Dorsolateral prefrontal cortex (tissue), 120 donors: ENCODE measurements at regions of chr3 and their contacts with region 1.

Region 1: DNA sequence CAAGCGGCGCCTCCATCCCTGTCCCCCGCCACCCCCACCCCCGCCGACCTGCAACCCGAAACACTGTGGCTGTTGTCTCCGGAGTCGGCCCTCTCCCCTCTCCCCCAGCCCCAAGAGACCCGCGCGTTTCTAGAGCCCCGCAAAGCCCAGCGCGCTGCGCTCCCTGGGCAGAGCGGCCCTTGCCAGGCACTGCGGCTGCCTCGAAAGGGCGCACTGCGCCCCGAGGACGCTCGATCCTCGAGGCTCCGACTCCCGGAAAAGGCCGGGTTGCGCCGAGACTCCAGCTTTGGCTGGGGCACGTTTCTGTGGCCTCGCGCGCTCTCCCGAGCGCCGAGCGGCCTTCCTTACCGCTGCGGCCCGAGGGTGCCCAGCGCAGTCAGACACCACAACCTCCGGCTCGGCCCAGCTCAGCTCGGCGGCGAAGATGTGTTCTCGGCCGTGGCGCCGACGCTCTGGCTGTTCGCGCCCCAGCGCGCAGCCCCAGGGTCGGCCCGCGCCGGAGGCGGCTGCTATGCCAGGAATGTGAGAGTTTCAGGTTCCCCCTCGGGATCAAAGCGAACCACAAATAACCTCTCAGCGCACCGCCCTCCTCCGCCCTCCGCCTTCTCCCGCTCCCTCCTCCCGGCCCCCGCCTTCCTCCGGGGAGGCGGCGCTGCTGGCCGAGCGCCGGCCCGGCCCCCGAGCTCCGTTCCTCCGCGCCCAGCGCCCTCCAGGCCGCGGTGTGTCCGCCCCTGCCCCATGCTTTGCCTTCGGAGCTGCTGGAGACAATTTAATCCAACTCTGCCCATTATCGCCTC is at the start of gene AMOTL2:
- DNase-seq: peak; percentile 55 to 88 (median 74)
- H3K4me3 ChIP-seq: peak within 1 kb of the TSS; percentile 53 to 96 (median 85)
- H3K27ac ChIP-seq: peak within 1 kb of the TSS; percentile 92 to 100 (median 100)
- H3K27me3 ChIP-seq: no peaks in the 10 kb centered on the region
- CTCF ChIP-seq: peak in 11 of 56 donors; percentile 7 to 46 (median 16)
- total RNA-seq, gene AMOTL2: 43.1 to 220 (median 75.3) TPM

Region 2: GRCh38 chr3:134212906-134213665 is 161.1 kb before region 1 on chr3:
- intact Hi-C with region 1: loop called in 1 of 2 experiments (anchors 5 kb)
- DNase-seq: peak; percentile 72 to 93 (median 85)
- H3K4me3 ChIP-seq: no peak overlapping the region
- H3K27ac ChIP-seq: peak overlapping the region in 9 of 59 donors; percentile 7 to 48 (median 17)
- H3K27me3 ChIP-seq: no peaks in the 10 kb centered on the region
- CTCF ChIP-seq: peak; percentile 86 to 100 (median 97)

Region 3: GRCh38 chr3:134250717-134251220 is 123.4 kb before region 1 on chr3 and contains the start of gene RYK:
- intact Hi-C with region 1: loop called (anchors 5 kb)
- DNase-seq: peak; percentile 62 to 87 (median 73)
- H3K4me3 ChIP-seq: peak within 1 kb of the TSS; percentile 44 to 97 (median 85)
- H3K27ac ChIP-seq: peak within 1 kb of the TSS; percentile 62 to 98 (median 90)
- H3K27me3 ChIP-seq: no peaks in the 10 kb centered on the region
- CTCF ChIP-seq: peak in 10 of 56 donors; percentile 13 to 39 (median 18)
- total RNA-seq, gene RYK: 28.9 to 62.9 (median 42.7) TPM

Region 4: DNA sequence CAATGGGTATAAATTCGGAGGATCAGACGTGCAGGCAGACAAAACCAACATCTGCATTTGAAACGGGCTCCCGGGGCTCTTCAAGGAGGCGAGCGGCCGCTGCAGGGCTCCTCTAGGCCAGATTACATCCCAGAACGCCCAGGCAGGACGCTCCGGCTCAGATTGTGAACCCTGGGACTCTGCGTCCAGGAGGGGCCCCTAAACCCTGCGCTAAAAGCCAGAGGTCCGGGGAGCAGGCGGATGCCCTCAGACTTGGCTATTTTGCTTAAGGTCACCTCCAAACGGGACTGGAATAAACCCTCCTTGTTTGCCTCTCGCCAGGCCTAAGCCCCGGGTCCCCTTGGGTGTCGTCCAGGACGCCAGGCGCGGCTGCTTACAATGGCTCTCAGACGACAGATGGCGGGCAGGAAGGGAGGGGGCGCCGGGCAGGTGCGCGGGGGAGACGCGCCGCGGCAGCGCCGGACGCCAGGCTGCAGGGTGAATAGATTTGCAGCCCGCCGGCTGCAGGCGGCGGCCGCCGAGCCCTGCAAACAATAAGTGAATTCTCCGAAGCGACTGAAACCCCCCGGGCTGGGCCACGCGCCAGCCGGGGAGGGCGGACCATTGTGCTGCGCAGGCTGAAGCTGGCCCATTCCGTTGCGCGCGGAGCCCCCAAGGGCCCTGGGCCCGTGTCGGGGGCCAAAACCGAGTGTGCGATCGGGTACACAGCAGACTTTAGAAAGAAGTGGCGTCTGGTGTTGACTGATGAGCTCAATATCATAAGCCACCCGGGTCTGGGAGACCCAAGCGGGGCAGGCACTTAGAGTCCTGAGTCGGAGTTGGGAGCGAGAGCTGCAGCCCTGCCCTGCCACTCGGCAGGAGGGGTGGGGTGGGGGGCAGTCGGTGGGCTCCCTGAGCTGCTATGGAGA is 32.4 kb after region 1 on chr3:
- intact Hi-C with region 1: loop called (anchors 5 kb)
- DNase-seq: peak; percentile 71 to 88 (median 84)
- H3K4me3 ChIP-seq: peak overlapping the region in 58 of 59 donors; percentile 15 to 74 (median 52)
- H3K27ac ChIP-seq: peak overlapping the region; percentile 20 to 95 (median 87)
- H3K27me3 ChIP-seq: peaks cover 0 to 7% (median 0%) of the 10 kb centered on the region in 45 donors
- CTCF ChIP-seq: peak in 17 of 56 donors; percentile 5 to 35 (median 18)

Region 5: DNA sequence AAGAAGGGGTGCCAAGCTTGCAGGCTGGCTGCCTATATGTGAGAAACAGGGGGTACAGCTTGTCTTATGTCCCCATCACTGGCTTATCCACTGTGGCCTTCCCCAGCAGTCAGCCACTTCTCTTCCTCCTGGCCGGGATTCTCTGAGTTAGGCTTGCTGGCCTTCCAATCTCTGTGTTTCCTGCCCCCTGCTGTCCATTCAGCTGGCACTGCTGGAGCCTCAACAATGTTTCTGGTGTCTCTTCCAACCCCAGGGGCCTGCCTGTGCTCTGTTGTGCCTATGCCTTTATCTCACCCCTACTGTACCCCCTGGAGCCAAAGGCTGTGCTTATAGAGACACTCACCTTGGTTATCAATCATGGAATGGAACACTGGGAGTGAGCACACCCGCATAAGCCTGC is 75.1 kb after region 1 on chr3:
- intact Hi-C with region 1: loop called (anchors 5 kb)
- DNase-seq: peak; percentile 44 to 77 (median 65)
- H3K4me3 ChIP-seq: no peak overlapping the region
- H3K27ac ChIP-seq: peak overlapping the region in 36 of 59 donors; percentile 6 to 78 (median 53)
- H3K27me3 ChIP-seq: no peaks in the 10 kb centered on the region
- CTCF ChIP-seq: peak in 55 of 56 donors; percentile 14 to 79 (median 60)

Region 6: DNA sequence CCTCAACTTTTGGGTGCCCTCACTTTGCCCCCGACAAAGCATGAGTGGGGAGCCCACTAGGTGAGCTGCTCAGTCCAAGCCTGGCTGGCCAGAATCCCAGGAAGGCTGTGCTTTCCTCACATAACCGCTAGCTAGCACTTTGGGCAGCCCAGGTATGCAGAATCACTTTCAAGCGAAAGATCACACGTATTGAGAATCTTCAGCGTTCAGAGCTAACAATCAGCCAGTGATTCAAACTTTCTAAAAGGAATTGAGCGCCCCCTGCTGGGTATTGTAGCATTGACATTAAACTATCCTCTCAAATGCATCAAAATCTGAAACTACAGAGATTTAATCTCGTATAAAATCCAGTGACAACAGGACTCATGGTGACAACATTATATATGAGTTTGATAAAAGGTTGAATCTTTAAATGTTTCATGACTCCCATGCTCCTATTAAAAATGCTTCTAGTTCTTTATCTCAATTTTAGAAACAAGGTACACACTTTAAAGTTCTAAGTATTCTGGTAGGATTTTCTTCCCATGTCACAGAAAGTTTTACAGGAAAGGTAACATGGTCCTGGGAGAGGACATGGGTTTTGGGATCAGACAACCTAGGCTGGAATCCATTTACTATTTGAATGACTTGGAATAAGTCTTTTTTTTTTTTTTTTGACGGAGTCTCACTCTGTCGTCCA is 99.8 kb after region 1 on chr3:
- intact Hi-C with region 1: loop called (anchors 5 kb)
- DNase-seq: peak in 6 of 10 donors; percentile 49 to 90 (median 76)
- H3K4me3 ChIP-seq: peak overlapping the region in 3 of 59 donors; percentile 6 to 35 (median 8)
- H3K27ac ChIP-seq: peak overlapping the region in 3 of 59 donors; percentile 1 to 16 (median 13)
- H3K27me3 ChIP-seq: no peaks in the 10 kb centered on the region
- CTCF ChIP-seq: peak; percentile 78 to 98 (median 90)

Region 7: GRCh38 chr3:134485718-134486576 is 111.8 kb after region 1 on chr3 and contains the starts of genes ANAPC13 and CEP63:
- intact Hi-C with region 1: loop called (anchors 5 kb)
- DNase-seq: peak; percentile 78 to 95 (median 90)
- H3K4me3 ChIP-seq: peak within 1 kb of the TSS; percentile 68 to 100 (median 93)
- H3K27ac ChIP-seq: peak within 1 kb of the TSS; percentile 85 to 98 (median 95)
- H3K27me3 ChIP-seq: no peaks in the 10 kb centered on the region
- CTCF ChIP-seq: peak in 28 of 56 donors; percentile 5 to 53 (median 20)
- total RNA-seq, gene ANAPC13: 18.9 to 65.9 (median 47.8) TPM
- total RNA-seq, gene CEP63: 27.2 to 57.8 (median 39.4) TPM

Region 8: DNA sequence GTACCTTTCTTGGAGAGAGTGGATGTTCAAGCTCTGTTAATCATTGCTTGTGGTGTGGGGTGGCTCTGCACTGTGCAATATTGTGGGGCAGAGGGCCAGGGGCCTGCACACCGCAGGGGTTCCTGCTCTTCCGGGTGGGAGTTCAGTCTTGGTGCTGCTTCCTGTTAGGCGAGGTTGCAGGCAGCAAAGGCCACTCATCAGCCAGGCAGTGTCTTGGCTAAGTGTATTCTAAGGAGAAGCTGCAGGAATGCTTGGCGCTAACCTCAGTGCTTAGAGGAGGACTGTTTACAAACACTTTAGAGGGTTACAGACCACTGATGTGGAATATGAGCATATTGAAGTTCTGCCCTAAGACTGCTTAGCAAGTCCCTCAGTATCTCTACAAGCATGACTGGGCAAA is 193.4 kb after region 1 on chr3:
- intact Hi-C with region 1: no loop called
- DNase-seq: no peak
- H3K4me3 ChIP-seq: no peak overlapping the region
- H3K27ac ChIP-seq: no peak overlapping the region
- H3K27me3 ChIP-seq: no peaks in the 10 kb centered on the region
- CTCF ChIP-seq: no peak